ENCODE measurements at regions of chr2 and their contacts with region 1.

Region 1: GRCh38 chr2:60926737-60927552 is 45.6 kb downstream of the REL start:
- DNase-seq: no peak
- ATAC-seq: peak in 1 of 2 donors; percentile 43
- H3K4me3 ChIP-seq: no peak overlapping the region
- H3K27ac ChIP-seq: no peak overlapping the region
- H3K4me1 ChIP-seq: no peaks in the 10 kb centered on the region
- H3K27me3 ChIP-seq: no peaks in the 10 kb centered on the region

Region 2: GRCh38 chr2:60794277-60794863 is 132.6 kb before region 1 on chr2:
- intact Hi-C with region 1: loop called in 1 of 4 experiments (anchors 10 kb)
- DNase-seq: no peak
- ATAC-seq: no peak
- H3K4me3 ChIP-seq: no peak overlapping the region
- H3K27ac ChIP-seq: no peak overlapping the region
- H3K4me1 ChIP-seq: no peaks in the 10 kb centered on the region
- H3K27me3 ChIP-seq: no peaks in the 10 kb centered on the region

Region 3: GRCh38 chr2:60976875-60977561 is 50.1 kb after region 1 on chr2:
- intact Hi-C with region 1: no loop called
- DNase-seq: no peak
- ATAC-seq: no peak
- H3K4me3 ChIP-seq: no peak overlapping the region
- H3K27ac ChIP-seq: no peak overlapping the region
- H3K4me1 ChIP-seq: no peaks in the 10 kb centered on the region
- H3K27me3 ChIP-seq: no peaks in the 10 kb centered on the region

Measured in right cardiac atrium (tissue), 5 donors.